A549 (cell line): ENCODE measurements at regions of chr19 and their contacts with region 1.

Region 1: DNA sequence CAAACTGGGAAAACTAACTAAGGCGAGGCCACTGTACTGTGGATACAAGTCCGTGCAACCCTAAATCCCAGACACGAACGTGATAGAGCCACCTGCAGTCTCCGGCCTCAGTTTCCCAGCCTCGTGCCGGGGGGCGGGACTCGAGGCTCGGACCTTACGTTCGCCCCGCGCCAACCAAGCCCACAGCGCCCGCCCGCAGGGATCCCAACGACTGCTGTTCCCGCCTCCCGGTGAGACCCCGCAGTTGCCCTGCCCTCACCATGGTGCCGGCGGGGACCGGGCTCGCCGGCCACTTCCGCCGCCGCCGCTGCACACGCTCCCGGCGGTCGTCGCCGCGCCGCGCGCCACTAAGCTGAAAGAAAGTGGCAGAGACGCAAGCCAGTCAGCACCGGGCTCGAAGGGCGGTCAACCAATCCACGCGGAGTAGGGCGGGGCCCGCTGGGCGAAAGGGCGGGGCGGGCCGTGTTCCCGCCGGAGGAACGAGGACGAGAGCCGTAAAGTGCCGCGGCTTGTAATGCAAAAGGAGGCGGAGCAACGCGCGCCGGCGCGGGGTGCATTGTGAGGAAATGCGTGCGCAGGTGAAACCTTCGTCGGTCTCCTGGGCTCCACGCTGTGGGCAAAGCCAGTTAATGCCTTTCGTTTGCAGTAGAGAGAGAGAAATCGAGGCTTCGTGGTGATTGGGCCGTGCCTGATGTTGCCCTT is at the start of gene LSM4:
- DNase-seq: peak; percentile 94 to 97
- ATAC-seq: peak; percentile 97
- H3K4me3 ChIP-seq: peak within 1 kb of the TSS; percentile 60
- H3K27ac ChIP-seq: peak within 1 kb of the TSS; percentile 93
- H3K4me1 ChIP-seq: peaks cover 40% of the 10 kb centered on the region
- CTCF ChIP-seq: no peak
- EP300 ChIP-seq: no peak
- POLR2A ChIP-seq: peak; percentile 62
- RAD21 ChIP-seq: peak; percentile 21 to 33; a peak in 3 of 5 replicates
- polyA plus RNA-seq, gene LSM4: 106 and 154 TPM in 2 replicates

Region 2: GRCh38 chr19:18291590-18292461 is 31.1 kb before region 1 on chr19:
- CTCF ChIA-PET with region 1: interaction called, 9 read pairs
- POLR2A ChIA-PET with region 1: interaction called, 48 read pairs
- DNase-seq: peak; percentile 65 to 93
- ATAC-seq: peak; percentile 74 to 77
- H3K4me3 ChIP-seq: peak overlapping the region; percentile 56
- H3K27ac ChIP-seq: peak overlapping the region; percentile 99 to 100
- H3K4me1 ChIP-seq: peaks cover 30% of the 10 kb centered on the region
- CTCF ChIP-seq: no peak
- EP300 ChIP-seq: peak; percentile 45 to 87; a peak in 3 of 5 replicates
- POLR2A ChIP-seq: peak; percentile 29
- RAD21 ChIP-seq: no peak

Region 3: DNA sequence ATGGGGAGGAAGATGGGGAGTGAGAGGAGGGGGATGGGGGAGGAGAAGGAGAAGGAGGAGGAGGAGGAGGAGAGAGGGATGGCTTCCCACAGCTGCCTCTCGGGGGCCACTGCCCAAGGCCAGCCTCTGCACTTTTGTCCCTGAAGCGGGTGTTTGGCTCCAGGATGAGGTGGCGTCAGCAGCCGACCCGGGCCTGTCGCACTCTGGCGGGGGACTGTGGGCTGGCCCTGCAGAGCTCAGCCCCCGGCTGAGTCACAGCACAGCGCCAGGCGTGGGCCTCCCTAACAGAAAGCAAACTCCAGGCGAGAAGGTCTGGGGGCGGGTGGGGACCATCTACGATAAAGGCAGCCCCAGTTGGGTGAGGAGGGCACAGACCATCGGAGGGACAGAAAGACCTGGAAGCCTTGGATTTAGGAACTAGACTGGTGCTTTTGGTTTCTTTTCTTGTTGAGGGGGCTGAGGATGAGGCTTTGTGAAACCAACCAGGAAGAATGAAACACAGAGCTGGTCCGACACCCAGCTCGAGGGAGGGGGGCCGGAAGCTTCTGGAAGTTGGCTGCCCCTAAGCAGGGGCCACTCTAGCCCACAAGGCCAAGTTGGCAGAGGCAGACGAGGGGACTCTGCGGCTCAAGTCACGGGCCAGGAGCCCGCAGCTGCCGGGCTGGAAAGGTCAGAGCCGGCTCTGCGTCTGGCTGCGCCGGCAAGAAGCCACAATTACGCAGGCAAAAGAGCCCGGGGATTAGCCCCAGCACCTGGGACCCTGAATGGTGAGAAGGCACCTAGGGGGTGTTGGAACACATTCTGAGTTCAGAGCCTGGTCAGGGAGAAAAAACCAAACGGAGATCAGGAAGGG is 18.2 kb before region 1 on chr19:
- CTCF ChIA-PET with region 1: interaction called, 7 read pairs
- POLR2A ChIA-PET with region 1: interaction called, 16 read pairs
- DNase-seq: peak in 1 of 2 experiments; percentile 79
- ATAC-seq: peak; percentile 77 to 79
- H3K4me3 ChIP-seq: peak overlapping the region; percentile 34
- H3K27ac ChIP-seq: peak overlapping the region; percentile 99 to 100
- H3K4me1 ChIP-seq: peaks cover 53% of the 10 kb centered on the region
- CTCF ChIP-seq: no peak
- EP300 ChIP-seq: no peak
- POLR2A ChIP-seq: no peak; the same call in 1 of the 2 replicates
- RAD21 ChIP-seq: no peak

Region 4: GRCh38 chr19:18310118-18310909 is 12.6 kb before region 1 on chr19:
- CTCF ChIA-PET with region 1: interaction called, 20 read pairs
- POLR2A ChIA-PET with region 1: interaction called, 16 read pairs
- DNase-seq: no peak
- ATAC-seq: no peak
- H3K4me3 ChIP-seq: no peak overlapping the region
- H3K27ac ChIP-seq: peak overlapping the region in 1 of 2 experiments; percentile 46; a peak in 1 of 6 replicates
- H3K4me1 ChIP-seq: peaks cover 12% of the 10 kb centered on the region
- CTCF ChIP-seq: no peak
- EP300 ChIP-seq: no peak
- POLR2A ChIP-seq: no peak
- RAD21 ChIP-seq: no peak

Region 5: GRCh38 chr19:18379803-18380747 is 57.2 kb after region 1 on chr19:
- CTCF ChIA-PET with region 1: no interaction called
- POLR2A ChIA-PET with region 1: no interaction called
- DNase-seq: peak; percentile 84 to 99
- ATAC-seq: peak; percentile 93 to 98
- H3K4me3 ChIP-seq: no peak overlapping the region
- H3K27ac ChIP-seq: peak overlapping the region; percentile 99 to 100
- H3K4me1 ChIP-seq: peaks cover 73% of the 10 kb centered on the region
- CTCF ChIP-seq: no peak
- EP300 ChIP-seq: peak; percentile 96 to 98
- POLR2A ChIP-seq: no peak
- RAD21 ChIP-seq: peak in 1 of 2 experiments; percentile 24; a peak in 1 of 5 replicates